ENCODE measurements at regions of chr2 and their contacts with region 1.

Region 1: DNA sequence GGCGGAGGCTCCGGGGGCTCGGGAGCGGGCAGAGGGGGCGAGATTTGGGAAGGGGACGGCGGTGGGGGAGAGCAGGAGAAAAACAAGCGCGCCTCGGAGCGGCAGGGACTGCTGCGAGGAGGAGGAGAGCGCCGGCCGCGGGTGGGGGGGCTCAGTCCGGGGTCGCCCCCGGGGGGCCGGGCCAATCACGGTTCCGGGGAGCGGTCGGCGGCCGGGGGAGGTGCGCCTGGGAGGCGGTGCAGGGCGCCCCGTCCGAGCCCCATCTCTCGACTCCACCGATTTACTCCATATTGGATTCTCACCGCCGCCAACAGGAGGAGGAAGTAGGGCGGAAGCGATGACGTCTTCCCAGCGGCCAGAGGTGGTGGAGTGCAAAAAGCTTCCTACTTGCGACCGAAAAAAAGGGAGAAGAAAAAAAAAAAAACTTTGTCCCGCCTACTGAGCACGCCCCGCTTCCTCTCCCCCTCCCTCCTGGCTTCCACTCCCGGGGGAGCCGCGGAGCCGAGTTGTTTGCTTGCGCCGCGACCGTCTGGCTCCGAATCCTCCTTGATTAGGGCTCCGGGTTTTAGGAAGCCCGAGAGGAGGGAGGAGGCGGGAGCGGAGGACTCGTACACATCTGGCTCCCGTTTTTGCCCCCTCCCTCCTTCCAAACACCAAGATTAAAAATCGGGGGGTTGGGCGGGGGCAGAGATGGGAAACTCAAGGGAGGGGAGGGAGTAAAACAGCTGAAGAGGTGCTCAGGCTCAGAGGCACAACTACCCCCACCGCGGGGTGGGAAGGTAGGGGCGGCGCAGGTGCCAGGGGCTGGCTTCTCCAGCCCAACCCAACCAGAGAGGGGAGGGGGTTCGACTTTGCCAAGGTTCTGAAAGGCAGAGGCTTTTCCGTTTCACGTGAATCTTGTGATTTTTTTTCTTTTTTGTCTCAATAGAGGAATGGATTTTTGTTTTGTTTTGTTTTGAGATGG is at the start of gene SPRED2:
- DNase-seq: peak; percentile 93 to 96 (median 95)
- ATAC-seq: peak; percentile 68 to 76 (median 72)
- H3K4me3 ChIP-seq: peak within 1 kb of the TSS; percentile 70 to 84 (median 83)
- H3K27ac ChIP-seq: peak within 1 kb of the TSS; percentile 89 to 91 (median 90)
- H3K4me1 ChIP-seq: peaks cover 0 to 23% (median 4%) of the 10 kb centered on the region in 4 donors
- H3K27me3 ChIP-seq: no peaks in the 10 kb centered on the region
- CTCF ChIP-seq: no peak
- POLR2A ChIP-seq: peak; percentile 86
- total RNA-seq, gene SPRED2: 11.0 to 22.5 (median 15.2) TPM

Region 2: DNA sequence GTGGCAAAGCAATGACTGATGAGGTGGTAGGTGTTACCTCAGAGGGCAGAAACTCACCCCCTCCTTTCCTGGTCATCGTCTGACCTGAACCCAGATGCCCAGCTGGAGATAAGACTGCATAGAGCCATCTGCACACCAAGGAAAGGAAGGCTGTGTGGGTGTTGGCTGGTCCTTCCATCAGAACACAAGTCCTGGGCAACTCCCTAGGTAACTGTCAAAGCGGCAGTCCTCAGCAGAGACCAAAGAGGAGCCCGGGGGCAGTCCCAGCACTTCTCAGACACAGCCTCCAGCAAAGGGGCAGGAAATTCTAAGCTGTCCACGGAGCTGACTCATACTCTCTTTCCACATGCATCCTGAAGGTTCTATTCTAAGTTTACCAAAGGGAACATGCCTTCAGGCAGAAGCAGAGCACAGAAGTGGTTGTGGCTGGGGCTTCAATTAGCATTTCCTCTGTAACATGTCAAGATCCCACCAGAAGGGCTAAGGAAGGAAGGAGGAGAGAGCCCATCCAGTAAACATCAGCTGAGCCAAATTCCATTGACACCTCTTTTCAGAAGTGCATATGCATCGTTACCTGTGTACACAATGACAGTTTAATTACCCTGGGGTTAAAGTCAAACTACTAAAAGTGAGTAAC is 54.8 kb before region 1 on chr2:
- intact Hi-C with region 1: loop called in 1 of 2 experiments (anchors 10 kb)
- DNase-seq: peak in 1 of 3 donors; percentile 35
- ATAC-seq: peak in 3 of 4 donors; percentile 30 to 64 (median 55)
- H3K4me3 ChIP-seq: no peak overlapping the region
- H3K27ac ChIP-seq: peak overlapping the region in 2 of 3 donors; percentile 11 to 38
- H3K4me1 ChIP-seq: peaks cover 0 to 70% (median 36%) of the 10 kb centered on the region in 4 donors
- H3K27me3 ChIP-seq: no peaks in the 10 kb centered on the region
- CTCF ChIP-seq: no peak
- POLR2A ChIP-seq: no peak

Measured in right lobe of liver (tissue), 6 donors.